ENCODE measurements at regions of chr9 and their contacts with region 1.

Region 1: DNA sequence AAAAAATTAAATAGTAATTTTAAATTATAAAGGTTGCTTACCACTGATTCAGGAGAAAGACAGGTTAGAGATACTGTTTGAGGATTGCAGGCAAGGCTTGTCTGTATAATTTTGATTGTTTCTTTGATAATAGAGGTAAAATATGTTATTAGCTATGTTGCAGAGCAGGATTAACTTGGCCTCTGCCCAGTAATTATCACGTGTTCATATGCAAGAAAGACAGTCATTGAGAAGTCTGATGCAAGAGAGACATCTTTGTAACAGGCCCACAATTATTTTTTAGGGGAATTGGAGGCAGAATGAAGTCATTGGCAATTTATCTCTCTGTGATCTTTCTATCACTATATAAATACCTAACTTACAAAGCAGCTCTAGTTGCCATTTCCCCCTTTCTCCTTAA is 45.9 kb downstream of the SLC44A1 start:
- DNase-seq: no peak
- ATAC-seq: no peak
- H3K4me3 ChIP-seq: peak overlapping the region in 1 of 3 experiments; percentile 24; a peak in 1 of 6 replicates
- H3K27ac ChIP-seq: peak overlapping the region; percentile 76
- H3K4me1 ChIP-seq: peaks cover 72% of the 10 kb centered on the region
- H3K27me3 ChIP-seq: no peaks in the 10 kb centered on the region
- CTCF ChIP-seq: no peak
- EP300 ChIP-seq: no peak
- POLR2A ChIP-seq: no peak
- RAD21 ChIP-seq: no peak

Region 2: DNA sequence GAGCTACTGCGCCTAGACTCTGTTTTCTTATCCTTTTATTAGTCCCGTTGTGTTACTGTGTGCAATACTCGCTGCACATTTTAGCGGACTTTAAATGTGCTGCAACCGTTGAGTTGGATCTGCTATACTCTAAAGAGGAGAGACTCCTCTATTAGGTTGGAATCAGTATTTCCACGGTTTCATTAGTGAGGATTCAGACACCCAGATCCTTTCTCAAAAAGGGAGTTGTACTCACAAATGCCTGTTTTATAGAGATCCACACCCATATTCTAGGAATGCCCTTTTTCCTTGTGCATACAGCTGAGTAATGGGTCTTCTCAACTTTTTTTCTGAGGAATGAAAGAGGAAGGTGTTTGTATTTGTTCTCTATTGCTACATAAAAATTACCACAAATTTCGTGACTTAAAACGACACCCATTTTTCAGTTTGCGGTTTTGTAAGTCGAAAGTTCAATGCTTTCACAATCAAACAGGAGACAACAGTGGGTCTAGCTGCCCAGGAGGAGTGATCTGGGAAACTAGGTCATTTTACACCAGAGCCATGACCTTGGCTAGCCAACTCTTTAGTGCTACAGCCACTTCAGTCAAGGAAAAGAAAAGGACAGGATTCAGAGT is 98.8 kb before region 1 on chr9:
- CTCF ChIA-PET with region 1: no interaction called
- POLR2A ChIA-PET with region 1: interaction called, 3 read pairs
- in situ Hi-C with region 1: no loop called
- intact Hi-C with region 1: loop called (anchors 5 kb)
- DNase-seq: peak; percentile 95
- ATAC-seq: peak; percentile 94
- H3K4me3 ChIP-seq: no peak overlapping the region; a peak in 1 of 6 replicates
- H3K27ac ChIP-seq: peak overlapping the region; percentile 67
- H3K4me1 ChIP-seq: peaks cover 57% of the 10 kb centered on the region
- H3K27me3 ChIP-seq: no peaks in the 10 kb centered on the region
- CTCF ChIP-seq: no peak
- EP300 ChIP-seq: peak; percentile 89 to 91
- POLR2A ChIP-seq: no peak
- RAD21 ChIP-seq: no peak

Region 3: DNA sequence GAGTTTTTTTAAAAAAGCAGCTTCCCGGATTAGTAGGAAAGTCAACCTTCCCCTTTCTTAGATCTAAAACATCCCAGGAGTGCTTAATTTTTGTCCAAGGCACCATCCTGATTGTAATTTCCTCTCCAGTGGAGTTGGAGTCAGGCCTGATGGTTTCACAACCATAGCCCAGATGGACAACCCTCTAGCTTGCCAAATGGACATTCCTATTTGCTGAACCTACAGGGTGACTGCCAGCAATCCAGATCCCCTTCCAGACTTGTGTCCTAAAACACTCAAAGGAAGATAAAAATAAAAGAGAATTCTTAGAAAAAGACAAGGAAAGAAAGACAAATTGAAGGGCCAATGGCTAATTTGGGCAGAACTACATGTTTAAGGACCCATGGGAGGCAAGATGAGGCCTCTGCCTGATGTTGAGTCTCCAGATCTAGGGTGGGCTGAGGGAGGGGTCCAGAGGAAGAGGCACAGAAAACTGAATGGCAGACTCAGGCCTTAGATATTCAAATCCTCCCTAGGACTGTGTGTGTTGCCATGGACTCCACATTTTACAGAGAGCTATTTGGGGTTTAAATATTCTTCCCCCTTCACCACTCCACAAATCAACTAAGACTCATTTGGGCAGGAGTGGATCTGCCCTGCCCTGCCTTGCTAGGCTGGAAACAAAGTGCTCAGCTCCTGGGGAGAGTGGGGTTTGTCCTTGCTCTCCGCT is 84.5 kb before region 1 on chr9:
- CTCF ChIA-PET with region 1: no interaction called
- POLR2A ChIA-PET with region 1: no interaction called
- in situ Hi-C with region 1: no loop called
- intact Hi-C with region 1: no loop called
- DNase-seq: no peak
- ATAC-seq: no peak
- H3K4me3 ChIP-seq: no peak overlapping the region
- H3K27ac ChIP-seq: no peak overlapping the region
- H3K4me1 ChIP-seq: peaks cover 9% of the 10 kb centered on the region
- H3K27me3 ChIP-seq: no peaks in the 10 kb centered on the region
- CTCF ChIP-seq: no peak
- EP300 ChIP-seq: no peak
- POLR2A ChIP-seq: no peak
- RAD21 ChIP-seq: no peak

Region 4: GRCh38 chr9:105244003-105244733 is 46.2 kb before region 1 on chr9 and contains the start of gene SLC44A1:
- CTCF ChIA-PET with region 1: no interaction called
- POLR2A ChIA-PET with region 1: interaction called, 17 read pairs
- in situ Hi-C with region 1: no loop called
- intact Hi-C with region 1: loop called (anchors 5 kb)
- DNase-seq: peak; percentile 86
- ATAC-seq: peak; percentile 97
- H3K4me3 ChIP-seq: peak within 1 kb of the TSS; percentile 93 to 98 (median 97)
- H3K27ac ChIP-seq: peak within 1 kb of the TSS; percentile 68
- H3K4me1 ChIP-seq: peaks cover 63% of the 10 kb centered on the region
- H3K27me3 ChIP-seq: no peaks in the 10 kb centered on the region
- CTCF ChIP-seq: peak; percentile 54; the same call in 1 of the 2 replicates
- EP300 ChIP-seq: peak; percentile 64 to 81; a peak in 3 of 4 replicates
- POLR2A ChIP-seq: peak; percentile 57 to 62
- RAD21 ChIP-seq: peak; percentile 81; the same call in 1 of the 2 replicates
- total RNA-seq, gene SLC44A1: 30.4 and 40.8 TPM in 2 replicates

Region 5: DNA sequence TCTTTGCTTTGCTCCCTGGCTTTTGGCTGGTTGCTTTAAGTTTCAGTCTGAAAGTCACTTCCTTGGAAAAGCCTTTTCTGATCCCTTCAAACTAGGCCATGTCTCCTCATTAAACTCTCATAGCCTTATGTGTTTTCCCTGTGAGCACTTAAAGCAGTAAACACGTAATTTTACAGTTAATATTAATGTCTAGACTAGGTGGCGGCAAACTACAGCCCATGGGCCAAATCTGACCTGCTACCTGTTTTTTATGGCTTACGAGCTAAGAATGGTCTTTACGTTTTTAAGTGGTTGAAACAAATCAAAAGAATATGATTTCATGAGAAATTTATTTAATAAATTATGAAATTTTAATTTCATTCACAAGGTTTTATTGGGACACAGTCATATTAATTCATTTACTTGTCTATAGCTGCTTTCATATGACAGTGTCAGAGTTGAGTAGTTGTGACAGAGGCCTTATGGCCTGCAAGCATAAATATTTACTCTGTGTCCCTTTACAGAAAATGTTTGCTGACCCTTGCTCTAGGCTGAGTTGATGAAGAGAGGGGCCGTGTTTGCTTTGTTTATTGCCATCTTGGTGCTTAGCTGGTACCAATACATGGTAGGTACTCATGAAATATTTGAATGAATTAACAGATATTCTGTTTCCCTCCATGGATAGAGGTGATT is 38.5 kb before region 1 on chr9:
- CTCF ChIA-PET with region 1: no interaction called
- POLR2A ChIA-PET with region 1: interaction called, 5 read pairs
- in situ Hi-C with region 1: loop called (anchors 5 kb)
- intact Hi-C with region 1: loop called (anchors 5 kb)
- DNase-seq: peak; percentile 86
- ATAC-seq: peak; percentile 97
- H3K4me3 ChIP-seq: peak overlapping the region in 2 of 3 experiments; percentile 24 to 49; a peak in 2 of 6 replicates
- H3K27ac ChIP-seq: peak overlapping the region; percentile 80
- H3K4me1 ChIP-seq: peaks cover 81% of the 10 kb centered on the region
- H3K27me3 ChIP-seq: no peaks in the 10 kb centered on the region
- CTCF ChIP-seq: peak; percentile 48
- EP300 ChIP-seq: peak in 1 of 2 experiments; percentile 78; a peak in 2 of 4 replicates
- POLR2A ChIP-seq: no peak
- RAD21 ChIP-seq: no peak

Region 6: GRCh38 chr9:105318729-105319191 is 28.4 kb after region 1 on chr9:
- CTCF ChIA-PET with region 1: no interaction called
- POLR2A ChIA-PET with region 1: interaction called, 32 read pairs
- in situ Hi-C with region 1: no loop called
- intact Hi-C with region 1: no loop called
- DNase-seq: peak; percentile 79
- ATAC-seq: peak; percentile 89
- H3K4me3 ChIP-seq: no peak overlapping the region; a peak in 1 of 6 replicates
- H3K27ac ChIP-seq: peak overlapping the region; percentile 65
- H3K4me1 ChIP-seq: peaks cover 33% of the 10 kb centered on the region
- H3K27me3 ChIP-seq: no peaks in the 10 kb centered on the region
- CTCF ChIP-seq: no peak
- EP300 ChIP-seq: peak in 1 of 2 experiments; percentile 62; a peak in 2 of 4 replicates
- POLR2A ChIP-seq: no peak
- RAD21 ChIP-seq: no peak

Region 7: DNA sequence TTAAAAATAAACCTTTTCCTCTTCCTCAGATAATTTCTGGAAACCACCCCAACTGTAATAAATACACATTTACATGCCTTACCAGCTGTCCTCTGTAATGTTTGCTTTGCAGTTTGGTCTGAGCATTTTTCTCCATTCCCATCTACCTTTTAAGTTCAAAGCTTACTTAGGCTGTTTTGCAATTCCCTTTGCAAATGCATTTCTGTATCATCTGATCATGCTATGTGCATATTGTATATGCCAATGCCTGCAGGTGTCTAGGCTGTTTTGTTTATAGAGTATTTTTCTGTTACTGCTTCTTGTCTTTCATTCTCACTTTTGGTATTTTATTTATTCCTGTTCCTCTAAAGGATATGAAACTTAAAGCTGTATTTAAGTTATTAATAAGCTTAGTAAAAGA is 40.4 kb after region 1 on chr9:
- CTCF ChIA-PET with region 1: no interaction called
- POLR2A ChIA-PET with region 1: interaction called, 25 read pairs
- in situ Hi-C with region 1: no loop called
- intact Hi-C with region 1: loop called (anchors 5 kb)
- DNase-seq: peak; percentile 89
- ATAC-seq: peak; percentile 91
- H3K4me3 ChIP-seq: peak overlapping the region in 1 of 3 experiments; percentile 3; a peak in 1 of 6 replicates
- H3K27ac ChIP-seq: peak overlapping the region; percentile 69
- H3K4me1 ChIP-seq: peaks cover 53% of the 10 kb centered on the region
- H3K27me3 ChIP-seq: no peaks in the 10 kb centered on the region
- CTCF ChIP-seq: no peak
- EP300 ChIP-seq: peak in 1 of 2 experiments; percentile 77; a peak in 2 of 4 replicates
- POLR2A ChIP-seq: no peak
- RAD21 ChIP-seq: no peak

Measured in HepG2 (cell line).